ENCODE measurements at regions of chr18 and their contacts with region 1.

Region 1: GRCh38 chr18:6543330-6543908 is 128.7 kb upstream of the L3MBTL4 start:
- DNase-seq: no peak
- H3K4me3 ChIP-seq: no peak overlapping the region
- H3K27ac ChIP-seq: no peak overlapping the region
- H3K27me3 ChIP-seq: no peaks in the 10 kb centered on the region
- CTCF ChIP-seq: peak; percentile 62

Region 2: DNA sequence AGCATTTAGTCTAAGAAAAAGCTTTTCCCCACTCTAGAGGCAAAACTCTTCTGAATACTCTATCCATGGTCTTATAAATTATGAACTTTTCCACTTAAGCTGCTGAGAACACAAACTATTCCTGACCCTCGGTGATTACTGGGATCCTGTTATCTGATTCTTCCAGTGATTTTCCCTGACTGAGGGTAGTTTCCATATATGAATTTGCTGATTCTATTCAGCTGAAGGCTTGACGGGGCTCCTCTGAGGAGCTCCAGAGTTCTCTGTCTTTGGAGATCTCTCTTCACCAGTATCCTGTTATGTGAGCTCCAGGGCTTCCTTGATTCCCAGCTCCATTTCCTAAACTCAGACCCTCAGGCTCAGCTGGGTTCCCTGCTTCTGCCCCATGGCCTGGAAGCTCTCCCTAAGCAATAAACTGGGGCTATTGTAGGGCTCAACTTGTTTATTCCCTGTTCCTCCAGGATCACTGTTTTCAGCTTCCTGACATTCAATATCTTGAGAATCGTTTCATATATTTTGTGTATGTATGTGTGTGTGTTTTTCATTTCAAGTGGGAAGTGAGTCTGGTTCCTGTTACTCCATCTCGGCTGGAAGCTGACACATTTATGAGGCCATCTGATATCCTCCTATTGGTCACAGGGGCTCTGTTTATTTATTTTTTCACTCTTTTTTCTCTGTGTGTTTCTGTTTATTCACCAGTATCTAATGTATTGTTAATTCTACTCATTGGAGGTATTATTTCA is 264.3 kb after region 1 on chr18:
- CTCF ChIA-PET with region 1: no interaction called
- POLR2A ChIA-PET with region 1: no interaction called
- DNase-seq: no peak
- H3K4me3 ChIP-seq: no peak overlapping the region
- H3K27ac ChIP-seq: no peak overlapping the region
- H3K27me3 ChIP-seq: no peaks in the 10 kb centered on the region
- CTCF ChIP-seq: no peak

Region 3: GRCh38 chr18:6885992-6886796 is 342.8 kb after region 1 on chr18:
- CTCF ChIA-PET with region 1: interaction called, 222 read pairs
- POLR2A ChIA-PET with region 1: no interaction called
- DNase-seq: peak; percentile 26
- H3K4me3 ChIP-seq: no peak overlapping the region
- H3K27ac ChIP-seq: no peak overlapping the region
- H3K27me3 ChIP-seq: no peaks in the 10 kb centered on the region
- CTCF ChIP-seq: peak; percentile 72

Measured in AG04450 (cell line).